Sigmoid colon (tissue), 7 donors: ENCODE measurements at regions of chr11 and their contacts with region 1.

Region 1: GRCh38 chr11:727859-728748 is 19.2 kb upstream of the TALDO1 start:
- DNase-seq: peak; percentile 92
- H3K4me3 ChIP-seq: no peak overlapping the region
- H3K27ac ChIP-seq: peak overlapping the region in 2 of 4 donors; percentile 30 to 43
- H3K4me1 ChIP-seq: peaks cover 0 to 30% (median 26%) of the 10 kb centered on the region in 4 donors
- H3K27me3 ChIP-seq: peaks cover 17 to 62% (median 50%) of the 10 kb centered on the region in 3 donors
- CTCF ChIP-seq: peak; percentile 93 to 100 (median 96)
- EP300 ChIP-seq: no peak
- POLR2A ChIP-seq: no peak

Region 2: GRCh38 chr11:554824-555472 is 173.2 kb before region 1 on chr11:
- intact Hi-C with region 1: loop called (anchors 2 kb)
- DNase-seq: no peak
- H3K4me3 ChIP-seq: peak overlapping the region in 3 of 4 donors; percentile 19 to 27 (median 20)
- H3K27ac ChIP-seq: no peak overlapping the region
- H3K4me1 ChIP-seq: peaks cover 0 to 22% (median 18%) of the 10 kb centered on the region in 4 donors
- H3K27me3 ChIP-seq: peaks cover 45 to 95% (median 88%) of the 10 kb centered on the region in 3 donors
- CTCF ChIP-seq: peak in 2 of 4 experiments; percentile 15 to 68
- EP300 ChIP-seq: no peak
- POLR2A ChIP-seq: no peak

Region 3: GRCh38 chr11:662689-663274 is 65.3 kb before region 1 on chr11:
- intact Hi-C with region 1: loop called (anchors 2 kb)
- DNase-seq: no peak
- H3K4me3 ChIP-seq: no peak overlapping the region
- H3K27ac ChIP-seq: no peak overlapping the region
- H3K4me1 ChIP-seq: peaks cover 0 to 17% (median 10%) of the 10 kb centered on the region in 4 donors
- H3K27me3 ChIP-seq: no peaks in the 10 kb centered on the region
- CTCF ChIP-seq: peak; percentile 65 to 70 (median 67)
- EP300 ChIP-seq: no peak
- POLR2A ChIP-seq: no peak

Region 4: GRCh38 chr11:695538-696248 is 32.4 kb before region 1 on chr11 and contains the start of gene TMEM80:
- intact Hi-C with region 1: no loop called
- DNase-seq: peak; percentile 100
- H3K4me3 ChIP-seq: peak within 1 kb of the TSS; percentile 78 to 98 (median 92)
- H3K27ac ChIP-seq: peak within 1 kb of the TSS; percentile 98 to 100 (median 99)
- H3K4me1 ChIP-seq: peaks cover 0 to 46% (median 41%) of the 10 kb centered on the region in 4 donors
- H3K27me3 ChIP-seq: no peaks in the 10 kb centered on the region
- CTCF ChIP-seq: no peak
- EP300 ChIP-seq: no peak
- POLR2A ChIP-seq: peak in 1 of 2 donors; percentile 20
- total RNA-seq, gene TMEM80: 20.9 to 41.5 (median 39.6) TPM